Activated CD4-positive, alpha-beta T cell treated with anti-CD3 and anti-CD28 coated beads, Interleukin-2, amount 10 ng/mL, durations not matched to agents 24 days and 14 days (primary cell): ENCODE measurements at regions of chr16 and their contacts with region 1.

Region 1: DNA sequence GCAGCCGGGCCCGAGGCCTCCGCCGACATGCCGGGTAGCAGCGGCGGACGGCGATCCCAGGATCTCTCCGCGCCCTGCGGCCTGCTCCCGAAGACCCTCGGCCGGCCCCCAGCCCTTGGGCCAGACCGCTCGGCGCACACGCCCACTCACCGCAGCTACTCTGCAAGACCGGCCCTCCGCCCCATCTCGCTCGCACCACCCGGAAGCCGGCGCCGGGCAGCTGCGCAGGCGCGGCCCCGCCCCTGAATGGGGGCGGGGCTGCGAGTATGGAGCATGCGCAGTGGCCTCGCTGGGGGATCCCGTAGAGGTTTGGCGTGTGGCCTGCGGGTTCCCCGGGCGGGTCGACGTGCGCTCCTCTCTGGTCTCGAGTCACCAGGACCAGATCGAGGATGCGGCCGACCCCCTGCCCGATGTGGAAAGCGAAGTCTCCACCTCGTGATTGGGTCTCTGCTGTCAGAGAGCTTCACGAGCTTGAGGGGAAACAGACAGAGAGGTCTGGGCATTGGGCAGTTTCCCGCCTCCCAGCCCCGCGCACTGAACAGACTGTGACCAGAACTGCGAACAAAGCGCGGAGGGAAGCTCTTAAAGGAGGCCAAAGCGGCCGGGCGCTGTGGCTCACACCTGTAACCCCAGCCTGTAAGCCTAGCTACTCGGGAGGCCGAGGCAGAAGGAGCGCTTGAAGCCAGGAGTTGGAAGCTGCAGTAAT is at the start of gene KCTD13:
- DNase-seq: peak; percentile 99
- H3K4me3 Mint-ChIP-seq: peak within 1 kb of the TSS; percentile 91
- H3K27ac Mint-ChIP-seq: peak within 1 kb of the TSS; percentile 95
- H3K4me1 Mint-ChIP-seq: peaks cover 33% of the 10 kb centered on the region
- H3K27me3 Mint-ChIP-seq: no peaks in the 10 kb centered on the region
- total RNA-seq, gene KCTD13: 51.4 and 58.8 TPM in 2 replicates

Region 2: DNA sequence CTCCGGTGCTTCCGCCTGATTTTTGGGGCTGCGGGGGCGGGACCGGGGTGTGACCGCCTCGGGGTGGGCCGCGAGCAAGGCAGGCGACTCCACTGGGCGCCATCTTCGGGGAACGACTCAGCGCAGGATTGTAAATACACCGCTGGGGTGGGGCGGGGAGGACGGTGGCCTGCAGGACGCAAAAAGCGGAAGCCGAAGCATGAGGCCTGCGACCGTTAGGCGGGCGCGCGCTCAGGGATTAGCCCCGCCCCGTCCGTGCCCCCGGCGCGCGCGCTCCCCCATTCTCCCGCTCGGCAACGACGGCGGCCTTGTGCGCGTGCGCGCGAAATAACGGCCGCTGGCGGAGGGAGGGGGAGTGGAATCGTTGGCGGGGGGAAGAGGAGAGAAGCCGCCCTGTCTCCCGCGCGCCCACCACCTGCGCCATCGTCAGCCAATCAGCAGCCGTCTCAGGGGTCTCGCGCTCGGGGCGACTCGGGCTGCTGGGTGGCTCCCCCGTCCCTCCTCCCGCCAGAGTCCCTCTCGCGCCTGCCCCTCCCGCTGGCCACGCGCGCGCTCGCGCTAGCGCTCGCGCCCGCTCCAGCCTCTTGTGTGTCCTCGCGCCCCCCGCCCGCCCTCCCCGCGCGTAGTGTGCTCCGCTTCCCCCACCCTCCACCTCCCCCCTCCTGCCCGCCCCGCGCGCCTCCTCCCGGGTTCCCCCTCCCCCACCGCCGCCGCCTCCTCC is 120.6 kb before region 1 on chr16:
- intact Hi-C with region 1: loop called (anchors 10 kb)
- DNase-seq: peak; percentile 99
- H3K4me3 Mint-ChIP-seq: peak overlapping the region; percentile 96
- H3K27ac Mint-ChIP-seq: peak overlapping the region; percentile 99
- H3K4me1 Mint-ChIP-seq: peaks cover 42% of the 10 kb centered on the region
- H3K27me3 Mint-ChIP-seq: no peaks in the 10 kb centered on the region

Region 3: GRCh38 chr16:29900102-29900887 is 25.9 kb before region 1 on chr16 and contains the start of gene ASPHD1:
- intact Hi-C with region 1: loop called (anchors 1 kb)
- DNase-seq: no peak
- H3K4me3 Mint-ChIP-seq: peak within 1 kb of the TSS; percentile 93
- H3K27ac Mint-ChIP-seq: peak within 1 kb of the TSS; percentile 85
- H3K4me1 Mint-ChIP-seq: peaks cover 12% of the 10 kb centered on the region
- H3K27me3 Mint-ChIP-seq: peaks cover 40% of the 10 kb centered on the region
- total RNA-seq, gene ASPHD1: 4.4 and 4.8 TPM in 2 replicates

Region 4: DNA sequence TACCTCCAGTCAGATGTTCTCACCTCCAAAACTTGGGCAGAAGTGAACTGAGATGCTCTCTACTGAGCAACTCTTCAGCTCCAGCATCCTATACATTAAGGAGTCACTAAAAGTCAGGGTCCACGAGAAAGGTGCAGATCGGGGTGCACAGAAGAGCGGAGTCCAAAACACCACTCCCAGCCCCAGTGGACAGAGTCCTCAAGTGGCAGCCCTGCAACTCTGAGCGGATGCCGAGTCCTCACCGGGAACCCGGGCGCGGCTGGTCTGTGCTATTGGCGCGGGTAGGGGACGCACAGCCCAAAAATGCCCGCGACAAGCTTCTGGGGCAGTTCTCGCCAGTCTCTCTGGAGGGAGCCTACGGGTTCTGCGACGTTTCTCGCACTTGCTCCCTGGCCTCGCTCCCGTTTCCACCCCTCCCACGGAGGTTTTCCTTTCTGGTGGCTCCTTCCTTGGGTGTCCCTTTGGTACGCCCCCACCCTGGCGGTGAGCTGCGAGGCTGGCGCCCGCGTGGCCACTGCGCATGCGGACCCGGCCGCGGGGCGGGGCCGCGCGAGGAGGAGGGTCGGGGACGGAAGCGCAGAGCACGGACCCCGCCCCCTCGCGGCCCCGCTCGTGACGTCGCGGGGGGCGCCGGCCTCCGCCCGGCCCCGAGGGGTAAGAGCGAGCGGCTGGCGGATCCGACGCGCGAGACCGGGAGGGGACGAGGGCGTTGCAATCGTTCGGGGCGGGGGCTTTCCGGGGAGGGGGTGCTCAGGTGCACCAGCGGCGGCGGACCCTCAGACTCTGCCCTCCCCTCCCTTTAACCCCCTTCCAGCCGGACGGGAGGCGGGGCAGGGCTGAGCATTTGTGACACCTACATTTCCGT is 35.6 kb after region 1 on chr16 and contains the start of gene TMEM219:
- intact Hi-C with region 1: loop called (anchors 1 kb)
- DNase-seq: peak; percentile 99
- H3K4me3 Mint-ChIP-seq: peak within 1 kb of the TSS; percentile 92
- H3K27ac Mint-ChIP-seq: peak within 1 kb of the TSS; percentile 87
- H3K4me1 Mint-ChIP-seq: peaks cover 15% of the 10 kb centered on the region
- H3K27me3 Mint-ChIP-seq: no peaks in the 10 kb centered on the region
- total RNA-seq, gene TMEM219: 41.7 and 43.8 TPM in 2 replicates

Region 5: DNA sequence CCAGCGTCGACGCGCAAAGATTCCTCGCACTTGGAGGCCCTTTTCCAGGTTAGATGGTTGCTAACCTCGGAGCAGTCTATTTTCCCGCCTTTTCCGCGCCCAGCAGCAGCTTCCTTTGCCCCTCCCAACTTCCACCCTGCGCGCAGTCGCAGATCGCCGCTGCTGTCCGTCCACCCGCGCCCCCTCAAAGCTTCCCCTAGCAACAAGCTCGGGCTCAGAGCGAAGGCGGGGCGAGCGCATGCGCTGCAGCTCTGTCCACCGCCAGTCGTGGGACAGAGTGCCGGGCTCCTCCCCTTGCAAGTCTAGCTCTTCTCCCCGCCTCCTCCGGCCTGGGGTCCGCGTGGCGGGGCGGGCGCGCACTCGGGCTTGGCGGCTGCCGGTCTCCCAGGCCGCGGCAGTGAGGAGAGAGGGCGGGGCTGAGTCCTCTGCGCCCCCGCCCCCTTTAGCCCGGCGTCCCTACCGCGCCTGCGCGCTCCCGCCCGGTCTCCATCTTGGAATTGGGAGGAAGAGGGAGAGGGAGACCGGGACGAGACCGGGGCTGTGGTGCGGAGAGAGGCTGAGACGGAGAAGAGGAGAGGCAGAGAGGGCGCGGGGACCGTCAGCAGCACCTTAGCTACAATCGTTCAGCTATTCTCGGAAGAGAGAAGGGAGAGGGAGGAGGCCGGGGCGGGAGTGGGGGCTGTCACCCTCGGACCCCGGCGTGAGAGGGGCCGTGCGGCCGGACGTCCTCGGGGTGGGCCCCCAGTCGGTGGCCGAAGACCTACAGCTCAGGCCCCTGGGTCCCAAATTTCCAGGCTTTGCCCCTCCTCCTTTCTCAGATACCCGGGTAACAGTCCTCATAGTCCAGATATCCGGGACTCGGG is 47.5 kb after region 1 on chr16 and contains the start of gene TAOK2:
- intact Hi-C with region 1: loop called (anchors 1 kb)
- DNase-seq: peak; percentile 99
- H3K4me3 Mint-ChIP-seq: peak within 1 kb of the TSS; percentile 91
- H3K27ac Mint-ChIP-seq: peak within 1 kb of the TSS; percentile 95
- H3K4me1 Mint-ChIP-seq: peaks cover 30% of the 10 kb centered on the region
- H3K27me3 Mint-ChIP-seq: no peaks in the 10 kb centered on the region
- total RNA-seq, gene TAOK2: 35.8 and 38.7 TPM in 2 replicates

Region 6: DNA sequence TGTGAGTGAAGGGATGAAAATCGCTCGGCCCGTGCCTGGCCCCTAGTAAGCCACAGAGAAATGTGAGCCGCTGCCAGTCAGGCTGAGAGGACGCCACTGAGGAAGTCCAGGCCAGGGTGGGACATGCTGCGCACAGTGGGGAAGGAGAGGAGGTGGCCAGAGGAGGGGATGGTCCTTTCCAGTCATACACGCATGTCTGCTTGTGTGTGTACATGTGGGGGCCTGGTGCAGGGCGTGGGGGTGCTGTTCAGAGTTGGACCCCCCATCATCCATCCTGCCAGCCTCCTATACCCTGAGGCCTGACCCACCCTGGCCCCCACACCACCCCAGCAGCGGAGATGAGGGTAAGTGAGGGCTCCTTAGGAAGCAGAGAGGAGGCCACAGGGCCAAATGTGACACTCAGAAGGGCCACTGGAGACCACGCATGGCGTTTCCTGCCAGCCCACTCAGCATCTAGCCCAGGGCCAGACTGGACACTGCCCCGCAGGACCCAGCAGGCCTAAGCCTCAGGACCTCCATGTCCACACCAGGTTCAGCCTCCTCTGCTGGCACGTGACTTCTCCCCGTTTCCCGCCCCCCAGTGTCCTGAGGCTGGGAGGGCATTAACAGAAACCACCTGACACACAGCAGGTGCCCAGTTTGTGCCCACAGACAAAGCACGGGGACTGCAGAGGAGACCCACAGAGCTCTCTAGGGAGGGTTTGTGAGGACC is 77.7 kb after region 1 on chr16:
- intact Hi-C with region 1: no loop called
- DNase-seq: no peak
- H3K4me3 Mint-ChIP-seq: no peak overlapping the region
- H3K27ac Mint-ChIP-seq: no peak overlapping the region
- H3K4me1 Mint-ChIP-seq: peaks cover 6% of the 10 kb centered on the region
- H3K27me3 Mint-ChIP-seq: peaks cover 2% of the 10 kb centered on the region